HEK293 (cell line): ENCODE measurements at regions of chr20 and their contacts with region 1.

Region 1: GRCh38 chr20:43537921-43538877 is 20.6 kb upstream of the SGK2 start:
- H3K4me3 ChIP-seq: no peak overlapping the region
- H3K27ac ChIP-seq: no peak overlapping the region
- H3K4me1 ChIP-seq: no peaks in the 10 kb centered on the region
- CTCF ChIP-seq: peak; percentile 57

Region 2: GRCh38 chr20:43416079-43416478 is 122.1 kb before region 1 on chr20:
- CTCF ChIA-PET with region 1: no interaction called
- POLR2A ChIA-PET with region 1: no interaction called
- H3K4me3 ChIP-seq: no peak overlapping the region
- H3K27ac ChIP-seq: no peak overlapping the region
- H3K4me1 ChIP-seq: no peaks in the 10 kb centered on the region
- CTCF ChIP-seq: no peak

Region 3: DNA sequence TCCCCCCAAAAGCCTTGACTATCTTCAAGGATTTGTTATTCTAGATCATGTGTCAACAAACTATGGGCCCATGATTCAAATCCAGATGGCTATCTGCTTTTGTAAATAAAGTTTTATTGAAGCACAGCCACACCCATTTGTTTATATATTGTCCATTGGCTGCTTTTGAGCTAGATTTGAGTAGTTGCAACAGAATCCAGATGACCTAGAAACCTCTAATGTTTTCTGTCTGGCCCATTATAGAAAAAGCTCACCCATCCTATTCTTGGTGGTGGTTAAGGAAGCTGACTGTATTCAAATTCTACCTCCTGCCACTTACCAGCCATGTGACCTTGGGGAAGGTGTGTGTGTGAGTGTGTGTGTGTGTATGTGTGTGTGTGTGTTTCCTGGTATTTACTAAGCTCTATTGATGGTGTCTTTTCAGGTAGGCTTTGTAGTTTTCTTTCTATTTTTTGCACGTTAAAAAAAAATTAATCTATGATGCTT is 189.9 kb after region 1 on chr20:
- CTCF ChIA-PET with region 1: interaction called, 10 read pairs
- POLR2A ChIA-PET with region 1: no interaction called
- H3K4me3 ChIP-seq: no peak overlapping the region
- H3K27ac ChIP-seq: no peak overlapping the region
- H3K4me1 ChIP-seq: peaks cover 9% of the 10 kb centered on the region; the same call in 1 of the 2 replicates
- CTCF ChIP-seq: no peak